Adrenal gland (tissue), 19 donors: ENCODE measurements at regions of chr3 and their contacts with region 1.

Region 1: DNA sequence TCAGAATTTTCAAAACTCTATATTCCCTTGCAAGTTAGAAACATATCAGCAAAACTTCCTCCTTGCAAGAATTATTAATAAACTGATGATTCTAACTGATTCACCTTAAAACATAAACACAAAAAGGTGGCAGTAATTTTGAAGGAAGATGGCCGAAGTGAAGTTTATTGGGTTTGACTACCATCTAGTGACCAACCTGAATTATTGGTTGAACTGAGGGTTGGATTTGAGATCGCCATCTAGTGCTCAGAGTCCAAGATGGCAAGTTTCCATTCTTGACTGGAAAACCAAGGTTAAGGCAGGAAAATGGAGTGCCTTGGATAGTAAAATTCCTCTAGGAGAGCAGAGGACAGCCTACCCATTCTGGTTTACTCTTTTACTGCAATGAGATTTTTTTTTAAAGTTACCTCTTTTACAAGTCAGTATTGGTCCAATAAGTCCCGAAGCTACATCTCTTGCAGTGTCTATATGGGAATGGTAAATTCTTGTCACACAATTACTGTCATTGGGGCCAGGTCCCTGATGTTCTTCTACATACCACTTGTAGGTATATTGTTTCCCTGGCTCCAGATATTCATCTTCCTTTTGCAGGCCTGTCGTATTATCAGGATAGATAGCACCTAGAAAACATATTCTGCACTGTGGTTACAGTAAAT is 51.6 kb upstream of the CP start:
- DNase-seq: peak; percentile 36 to 81 (median 59)
- H3K4me3 ChIP-seq: no peak overlapping the region
- H3K27ac ChIP-seq: no peak overlapping the region
- H3K4me1 ChIP-seq: no peaks in the 10 kb centered on the region
- H3K27me3 ChIP-seq: no peaks in the 10 kb centered on the region
- CTCF ChIP-seq: peak; percentile 69 to 100 (median 98)
- POLR2A ChIP-seq: no peak

Region 2: DNA sequence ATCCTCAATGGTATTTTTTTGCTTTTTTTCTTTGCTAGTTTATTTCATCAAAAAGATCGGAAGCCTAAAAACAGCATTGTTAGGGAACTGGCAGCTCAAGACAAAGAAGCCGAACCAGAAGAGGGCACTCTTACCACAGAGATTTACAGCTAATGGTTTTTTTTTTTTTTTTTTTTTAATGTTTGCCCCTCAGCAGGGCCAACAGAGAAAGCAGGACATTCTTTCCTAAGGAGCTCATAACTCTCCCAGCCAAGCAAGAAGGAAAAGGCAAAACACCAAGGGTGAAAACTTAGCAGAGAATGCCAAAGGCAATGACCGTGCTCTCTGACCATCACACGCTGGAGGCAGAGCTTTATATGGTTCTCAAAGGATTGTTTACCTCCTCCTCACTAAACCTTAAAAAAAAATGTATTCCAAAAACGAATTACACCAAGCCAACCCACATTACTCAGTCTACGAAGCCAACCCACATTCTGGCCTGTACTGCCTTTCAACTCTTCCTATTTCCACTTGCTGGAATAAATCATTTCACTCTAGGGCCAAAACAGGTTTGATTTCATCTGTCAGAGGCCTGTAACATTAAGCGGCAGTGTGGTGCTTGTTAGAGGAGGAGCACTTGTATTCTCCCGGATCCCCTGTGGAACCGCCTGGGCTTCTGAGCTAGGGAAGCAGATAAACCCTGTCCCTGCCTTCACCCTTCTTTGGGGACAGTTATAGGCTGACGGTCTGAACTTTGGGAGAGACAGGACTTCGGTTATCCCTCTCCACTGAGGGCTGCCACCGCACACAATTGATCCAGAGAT is 317.5 kb before region 1 on chr3:
- intact Hi-C with region 1: loop called (anchors 5 to 10 kb)
- DNase-seq: peak; percentile 25 to 75 (median 63)
- H3K4me3 ChIP-seq: no peak overlapping the region
- H3K27ac ChIP-seq: peak overlapping the region in 2 of 5 donors; percentile 68 to 71
- H3K4me1 ChIP-seq: peaks cover 9 to 10% of the 10 kb centered on the region in 2 donors
- H3K27me3 ChIP-seq: no peaks in the 10 kb centered on the region
- CTCF ChIP-seq: peak; percentile 27 to 76 (median 63)
- POLR2A ChIP-seq: no peak

Region 3: GRCh38 chr3:149114458-149114857 is 158.8 kb before region 1 on chr3:
- intact Hi-C with region 1: loop called in 1 of 2 experiments (anchors 5 kb)
- DNase-seq: peak in 2 of 7 donors; percentile 28 to 38
- H3K4me3 ChIP-seq: no peak overlapping the region
- H3K27ac ChIP-seq: no peak overlapping the region
- H3K4me1 ChIP-seq: no peaks in the 10 kb centered on the region
- H3K27me3 ChIP-seq: no peaks in the 10 kb centered on the region
- CTCF ChIP-seq: no peak
- POLR2A ChIP-seq: no peak

Region 4: GRCh38 chr3:149120051-149120972 is 152.9 kb before region 1 on chr3:
- intact Hi-C with region 1: loop called (anchors 5 kb)
- DNase-seq: no peak
- H3K4me3 ChIP-seq: no peak overlapping the region
- H3K27ac ChIP-seq: no peak overlapping the region
- H3K4me1 ChIP-seq: peaks cover 0 to 7% of the 10 kb centered on the region in 2 donors
- H3K27me3 ChIP-seq: no peaks in the 10 kb centered on the region
- CTCF ChIP-seq: peak; percentile 48 to 89 (median 78)
- POLR2A ChIP-seq: no peak